Activated naive CD4-positive, alpha-beta T cell treated with anti-CD3 and anti-CD28 coated beads for 36 hours (primary cell): ENCODE measurements at regions of chr15 and their contacts with region 1.

Region 1: GRCh38 chr15:70488002-70488605 is 275.3 kb downstream of the UACA start:
- DNase-seq: peak; percentile 84
- H3K4me3 Mint-ChIP-seq: no peak overlapping the region
- H3K27ac Mint-ChIP-seq: no peak overlapping the region
- H3K4me1 Mint-ChIP-seq: peaks cover 42% of the 10 kb centered on the region
- H3K27me3 Mint-ChIP-seq: peaks cover 2% of the 10 kb centered on the region

Region 2: GRCh38 chr15:69468241-69469121 is 1019.6 kb before region 1 on chr15:
- CTCF ChIA-PET with region 1: interaction called, 4 read pairs
- intact Hi-C with region 1: loop called (anchors 2 kb)
- DNase-seq: peak; percentile 89
- H3K4me3 Mint-ChIP-seq: peak overlapping the region; percentile 25
- H3K27ac Mint-ChIP-seq: peak overlapping the region; percentile 75
- H3K4me1 Mint-ChIP-seq: peaks cover 27% of the 10 kb centered on the region
- H3K27me3 Mint-ChIP-seq: no peaks in the 10 kb centered on the region

Region 3: DNA sequence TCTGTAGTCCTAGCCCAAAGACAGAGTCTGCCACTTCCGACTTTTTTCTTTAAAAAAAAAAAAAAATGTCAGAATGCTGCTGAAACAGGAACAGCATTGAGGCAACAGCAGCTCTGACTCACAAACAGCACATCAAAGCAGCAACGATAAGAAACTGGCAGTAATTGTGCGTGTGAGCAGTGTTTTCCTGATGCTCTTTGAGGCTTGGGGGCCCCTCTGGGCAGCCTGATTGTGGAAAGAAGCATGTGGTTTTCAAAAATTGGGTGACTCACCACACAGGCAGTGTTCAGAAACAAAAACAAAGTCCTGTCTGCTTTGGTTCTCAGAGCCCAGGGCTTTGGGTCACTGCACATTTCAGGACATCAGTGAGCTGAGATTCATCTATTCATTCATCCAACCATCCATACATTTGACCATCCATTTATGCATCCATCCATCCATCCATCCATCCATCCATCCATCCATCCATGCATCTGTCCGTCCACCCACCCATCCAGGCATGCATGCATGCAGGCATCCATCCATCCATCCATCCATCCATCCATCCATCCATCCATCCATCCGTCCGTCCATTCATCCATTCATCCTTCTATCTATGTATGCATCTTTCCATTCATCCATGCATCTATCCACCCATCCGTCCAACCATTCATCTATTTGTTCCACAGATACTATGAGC is 727.1 kb before region 1 on chr15:
- CTCF ChIA-PET with region 1: no interaction called
- intact Hi-C with region 1: loop called (anchors 1 kb)
- DNase-seq: peak; percentile 93
- H3K4me3 Mint-ChIP-seq: peak overlapping the region; percentile 20
- H3K27ac Mint-ChIP-seq: peak overlapping the region; percentile 97
- H3K4me1 Mint-ChIP-seq: peaks cover 74% of the 10 kb centered on the region
- H3K27me3 Mint-ChIP-seq: peaks cover 2% of the 10 kb centered on the region

Region 4: GRCh38 chr15:70375586-70375985 is 112.5 kb before region 1 on chr15:
- CTCF ChIA-PET with region 1: no interaction called
- intact Hi-C with region 1: no loop called
- DNase-seq: no peak
- H3K4me3 Mint-ChIP-seq: no peak overlapping the region
- H3K27ac Mint-ChIP-seq: no peak overlapping the region
- H3K4me1 Mint-ChIP-seq: no peaks in the 10 kb centered on the region
- H3K27me3 Mint-ChIP-seq: peaks cover 5% of the 10 kb centered on the region

Region 5: DNA sequence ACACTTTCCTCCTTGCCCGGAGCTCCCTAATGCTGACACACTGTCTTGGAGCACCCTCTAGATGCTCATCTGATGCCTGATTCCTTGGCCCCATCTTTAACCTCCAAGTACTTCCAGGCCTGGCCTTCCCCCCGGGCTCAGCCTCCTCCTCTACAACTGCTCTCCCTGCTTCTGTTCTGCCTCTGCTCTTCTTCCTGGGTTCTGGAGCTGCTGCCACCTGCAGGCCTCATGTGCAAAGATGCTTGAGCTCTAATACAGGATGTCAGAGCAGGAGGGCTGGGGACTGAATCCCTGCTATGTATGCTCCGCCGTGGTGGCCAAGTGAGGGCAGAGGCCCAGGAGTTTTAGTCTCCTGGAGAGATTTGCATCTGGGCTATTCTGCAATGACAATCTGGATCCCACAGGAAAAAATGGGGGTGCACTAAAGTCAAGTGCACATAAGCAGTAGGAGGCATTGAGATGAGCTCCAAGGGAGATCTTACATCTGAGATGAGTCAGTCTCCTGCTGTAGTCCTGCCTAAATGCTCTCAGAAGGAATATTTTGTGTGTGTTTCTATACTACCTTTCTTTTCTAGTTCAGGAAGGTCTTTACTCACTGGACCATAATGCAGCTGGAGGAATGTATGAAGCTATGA is 21.1 kb before region 1 on chr15:
- CTCF ChIA-PET with region 1: interaction called, 35 read pairs
- intact Hi-C with region 1: loop called (anchors 2 kb)
- DNase-seq: peak; percentile 71
- H3K4me3 Mint-ChIP-seq: no peak overlapping the region
- H3K27ac Mint-ChIP-seq: no peak overlapping the region
- H3K4me1 Mint-ChIP-seq: peaks cover 4% of the 10 kb centered on the region
- H3K27me3 Mint-ChIP-seq: no peaks in the 10 kb centered on the region

Region 6: DNA sequence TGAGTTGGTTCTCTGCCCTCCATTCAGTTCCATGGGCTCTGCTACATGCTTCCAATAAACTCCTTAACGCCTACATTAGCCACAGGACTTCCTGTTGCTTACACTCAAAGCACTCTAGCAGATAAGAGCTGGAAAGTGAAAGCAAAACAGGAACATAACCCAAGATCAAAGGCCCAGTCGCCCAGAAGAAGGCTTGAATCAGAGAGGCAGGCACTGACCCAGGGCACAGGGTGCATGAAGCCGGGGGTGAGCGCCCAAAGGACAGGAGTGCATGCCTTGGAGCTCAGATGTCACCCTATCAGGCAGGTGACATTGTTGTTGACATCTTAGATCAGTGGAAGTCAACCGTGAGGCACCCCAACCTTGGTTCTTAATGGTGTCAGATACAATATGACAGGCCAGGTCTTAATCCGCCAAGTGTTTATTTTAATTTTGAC is 40.2 kb after region 1 on chr15:
- CTCF ChIA-PET with region 1: interaction called, 4 read pairs
- intact Hi-C with region 1: loop called (anchors 1 kb)
- DNase-seq: peak; percentile 78
- H3K4me3 Mint-ChIP-seq: peak overlapping the region; percentile 62
- H3K27ac Mint-ChIP-seq: peak overlapping the region; percentile 85
- H3K4me1 Mint-ChIP-seq: peaks cover 74% of the 10 kb centered on the region
- H3K27me3 Mint-ChIP-seq: no peaks in the 10 kb centered on the region

Region 7: GRCh38 chr15:70559265-70560239 is 71.4 kb after region 1 on chr15:
- CTCF ChIA-PET with region 1: no interaction called
- intact Hi-C with region 1: loop called (anchors 2 kb)
- DNase-seq: peak; percentile 92
- H3K4me3 Mint-ChIP-seq: no peak overlapping the region
- H3K27ac Mint-ChIP-seq: no peak overlapping the region
- H3K4me1 Mint-ChIP-seq: peaks cover 12% of the 10 kb centered on the region
- H3K27me3 Mint-ChIP-seq: no peaks in the 10 kb centered on the region

Region 8: GRCh38 chr15:71252044-71252906 is 764.2 kb after region 1 on chr15:
- CTCF ChIA-PET with region 1: no interaction called
- intact Hi-C with region 1: no loop called
- DNase-seq: no peak
- H3K4me3 Mint-ChIP-seq: no peak overlapping the region
- H3K27ac Mint-ChIP-seq: no peak overlapping the region
- H3K4me1 Mint-ChIP-seq: no peaks in the 10 kb centered on the region
- H3K27me3 Mint-ChIP-seq: no peaks in the 10 kb centered on the region